Left ventricle myocardium inferior (tissue), 1 donor: ENCODE measurements at regions of chr3 and their contacts with region 1.

Region 1: GRCh38 chr3:98522244-98523090 is at the start of gene CLDND1:
- DNase-seq: peak; percentile 98
- H3K4me3 ChIP-seq: peak within 1 kb of the TSS; percentile 89
- H3K27ac ChIP-seq: peak within 1 kb of the TSS; percentile 99
- H3K4me1 ChIP-seq: peaks cover 50% of the 10 kb centered on the region
- H3K27me3 ChIP-seq: no peaks in the 10 kb centered on the region
- CTCF ChIP-seq: no peak
- total RNA-seq, gene CLDND1: 69.9 TPM

Region 2: DNA sequence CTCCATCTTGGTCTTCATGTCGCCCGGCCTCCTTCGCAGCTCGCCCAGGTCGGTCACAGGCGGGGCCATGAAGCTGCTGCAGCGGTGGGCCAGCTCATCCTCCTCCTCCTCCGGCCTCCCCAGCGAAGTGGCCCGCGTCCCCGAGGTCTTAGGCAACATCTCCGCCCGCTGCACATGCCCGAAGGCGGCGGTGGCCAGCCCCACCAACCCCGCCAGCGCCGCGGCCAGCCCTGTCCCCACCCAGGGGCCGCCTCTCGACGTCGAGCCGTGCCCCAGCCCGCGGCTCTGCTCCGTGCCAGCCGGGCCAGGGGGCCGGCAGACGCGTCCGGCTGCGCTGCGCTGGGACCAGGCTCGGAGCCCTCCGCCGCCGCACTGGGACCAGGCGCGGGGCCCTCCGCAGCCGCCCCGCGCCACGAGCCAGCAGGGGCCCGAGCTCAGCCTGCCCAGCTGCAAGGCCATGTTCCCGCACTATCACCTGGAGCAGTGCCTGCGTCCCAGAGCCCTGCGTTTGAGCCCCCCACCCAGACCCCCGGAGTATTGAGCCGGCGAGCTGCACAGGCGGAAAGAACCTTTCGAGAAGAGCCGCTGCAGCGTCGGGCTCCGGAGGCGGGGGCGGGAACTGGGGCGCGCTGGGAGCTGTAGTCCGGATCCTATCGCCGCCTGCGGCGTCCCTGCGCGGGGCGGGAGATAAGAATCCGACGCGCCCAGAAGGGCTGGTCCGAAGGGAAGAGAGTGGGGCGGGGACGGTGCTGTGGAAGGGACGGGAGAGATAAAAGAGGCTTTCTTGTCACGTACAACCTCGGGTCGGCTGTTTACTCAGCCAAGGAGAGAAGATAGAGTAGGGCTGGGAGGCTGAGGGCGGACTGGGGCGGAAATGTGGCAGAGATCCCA is 70.8 kb after region 1 on chr3 and contains the start of gene CPOX:
- intact Hi-C with region 1: loop called (anchors 5 kb)
- DNase-seq: peak; percentile 88
- H3K4me3 ChIP-seq: peak within 1 kb of the TSS; percentile 92
- H3K27ac ChIP-seq: peak within 1 kb of the TSS; percentile 90
- H3K4me1 ChIP-seq: peaks cover 47% of the 10 kb centered on the region
- H3K27me3 ChIP-seq: no peaks in the 10 kb centered on the region
- CTCF ChIP-seq: no peak
- total RNA-seq, gene CPOX: 12.8 TPM